IMR-90 (cell line): ENCODE measurements at regions of chr17 and their contacts with region 1.

Region 1: DNA sequence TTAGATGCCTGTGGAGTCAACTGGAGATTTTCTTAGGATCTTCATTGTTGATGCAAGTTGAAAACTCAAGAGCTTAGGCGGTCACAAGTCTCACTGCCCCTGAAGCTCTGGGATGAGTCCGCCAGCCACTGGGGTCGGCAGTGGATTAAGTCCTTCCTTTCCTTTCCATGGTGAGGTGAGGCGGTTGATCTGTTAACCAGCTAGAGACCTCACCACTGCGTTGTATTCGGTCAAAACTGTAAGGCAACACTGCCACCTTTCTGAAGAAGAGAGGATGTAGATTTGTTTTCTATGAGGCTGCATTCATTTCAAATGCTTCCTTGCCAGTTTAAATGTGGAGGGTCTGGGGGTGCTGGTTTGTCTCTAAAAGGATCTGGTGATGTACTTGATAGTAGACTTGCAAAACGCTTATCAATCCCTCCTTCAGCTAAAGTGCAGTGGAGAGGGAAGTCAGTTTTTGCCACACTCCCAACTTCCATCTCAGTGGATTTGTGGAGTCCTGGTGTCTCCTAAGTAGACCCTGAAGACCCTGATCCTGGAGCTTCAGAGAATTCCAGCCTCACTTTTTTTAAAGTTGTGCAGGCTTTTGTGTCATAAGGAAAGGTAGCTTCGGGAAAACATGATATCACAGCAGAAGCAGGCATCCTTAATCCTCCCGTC is 1.7 kb downstream of the MYOCD start:
- DNase-seq: peak; percentile 89
- ATAC-seq: peak; percentile 63
- H3K4me3 ChIP-seq: peak overlapping the region; percentile 94
- H3K27ac ChIP-seq: peak overlapping the region; percentile 42
- H3K4me1 ChIP-seq: peaks cover 9% of the 10 kb centered on the region
- H3K27me3 ChIP-seq: no peaks in the 10 kb centered on the region
- CTCF ChIP-seq: peak; percentile 87
- POLR2A ChIP-seq: peak; percentile 46
- RAD21 ChIP-seq: peak; percentile 93

Region 2: DNA sequence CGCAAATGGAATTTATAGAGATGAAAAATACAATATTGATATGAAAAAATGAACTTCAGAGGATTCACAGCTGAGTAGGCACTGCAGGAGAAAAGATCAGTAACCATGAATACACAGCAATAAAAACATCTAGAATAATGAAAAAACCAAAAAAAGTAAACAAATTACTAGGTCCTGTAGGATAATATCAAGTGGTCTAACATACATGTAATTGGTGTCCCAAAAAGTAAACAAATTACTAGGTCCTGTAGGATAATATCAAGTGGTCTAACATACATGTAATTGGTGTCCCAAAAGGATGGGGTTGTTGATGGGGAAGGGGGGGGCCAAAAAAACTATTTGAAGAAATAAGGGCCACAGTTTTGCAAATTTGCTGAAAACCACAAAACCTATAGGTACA is 713.5 kb before region 1 on chr17:
- CTCF ChIA-PET with region 1: no interaction called
- POLR2A ChIA-PET with region 1: no interaction called
- dilution Hi-C with region 1: no loop called
- in situ Hi-C with region 1: no loop called
- intact Hi-C with region 1: no loop called
- DNase-seq: no peak
- ATAC-seq: no peak
- H3K4me3 ChIP-seq: no peak overlapping the region
- H3K27ac ChIP-seq: no peak overlapping the region
- H3K4me1 ChIP-seq: no peaks in the 10 kb centered on the region
- H3K27me3 ChIP-seq: no peaks in the 10 kb centered on the region
- CTCF ChIP-seq: no peak
- POLR2A ChIP-seq: no peak
- RAD21 ChIP-seq: no peak

Region 3: DNA sequence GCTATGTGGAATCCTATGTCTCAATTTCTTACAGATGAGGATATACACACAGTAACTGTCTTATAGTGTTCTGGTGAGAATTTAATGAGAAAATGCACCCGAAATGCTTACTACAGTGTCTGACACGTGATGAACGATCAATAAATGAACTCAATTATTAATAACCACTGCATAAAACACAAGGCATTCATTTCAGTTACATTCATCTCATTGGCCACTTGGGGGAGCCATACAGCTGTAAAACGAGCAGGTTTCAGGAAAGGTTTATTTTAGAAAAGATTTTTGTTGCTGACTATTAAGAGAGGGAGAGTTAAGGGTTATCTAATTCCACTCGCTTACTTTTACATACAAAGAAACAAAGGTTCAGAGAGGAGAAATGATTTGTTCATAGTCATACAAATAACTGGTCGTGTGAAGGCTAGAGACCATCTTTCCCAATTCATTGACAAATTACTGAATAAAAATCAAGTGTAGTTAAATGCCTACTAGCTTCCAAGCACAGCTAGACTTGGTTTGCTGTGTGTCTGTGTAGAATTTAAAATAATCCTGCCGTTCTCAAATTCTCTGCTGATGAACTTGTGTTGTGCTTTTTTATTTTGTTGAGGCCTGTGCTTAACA is 486.7 kb before region 1 on chr17:
- CTCF ChIA-PET with region 1: interaction called, 8 read pairs
- POLR2A ChIA-PET with region 1: no interaction called
- dilution Hi-C with region 1: no loop called
- in situ Hi-C with region 1: loop called (anchors 5 kb)
- intact Hi-C with region 1: loop called (anchors 1 kb)
- DNase-seq: peak; percentile 79
- ATAC-seq: peak; percentile 96
- H3K4me3 ChIP-seq: no peak overlapping the region
- H3K27ac ChIP-seq: no peak overlapping the region
- H3K4me1 ChIP-seq: no peaks in the 10 kb centered on the region
- H3K27me3 ChIP-seq: no peaks in the 10 kb centered on the region
- CTCF ChIP-seq: peak; percentile 90
- POLR2A ChIP-seq: 0 out of 2 replicates have a peak, but pooled peaks have one; percentile 30
- RAD21 ChIP-seq: peak; percentile 91

Region 4: DNA sequence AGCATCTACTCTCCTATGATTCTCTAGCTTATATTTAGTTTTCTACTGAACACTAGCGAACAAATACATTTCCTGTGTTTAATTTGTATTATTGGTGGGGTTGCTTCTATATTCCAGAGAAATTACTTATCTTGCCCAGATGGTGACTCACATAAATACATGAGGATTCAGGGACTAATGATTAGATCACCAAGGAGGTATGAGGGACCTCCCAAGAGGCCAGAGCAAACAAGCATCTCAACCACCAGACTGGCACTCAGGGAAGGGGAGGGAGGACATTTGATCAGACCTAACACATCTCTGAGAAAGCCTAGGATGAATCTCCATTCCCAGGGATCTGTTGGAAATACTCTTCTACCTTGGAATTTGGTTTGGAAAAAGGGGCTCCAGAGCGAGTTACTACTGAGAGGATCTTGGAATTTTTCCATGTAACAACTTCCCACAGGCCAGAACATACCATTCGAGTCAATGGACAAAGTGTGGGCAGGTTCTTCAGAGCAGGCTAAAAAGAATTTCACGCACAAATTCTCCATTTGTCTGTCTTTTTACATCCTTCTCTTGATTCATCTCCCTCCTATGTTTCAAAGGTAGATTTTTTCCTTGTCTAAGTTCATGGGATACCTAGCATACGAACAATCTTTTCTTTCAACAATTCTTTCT is 264.3 kb before region 1 on chr17:
- CTCF ChIA-PET with region 1: no interaction called
- POLR2A ChIA-PET with region 1: no interaction called
- dilution Hi-C with region 1: no loop called
- in situ Hi-C with region 1: no loop called
- intact Hi-C with region 1: loop called (anchors 5 kb)
- DNase-seq: peak; percentile 97
- ATAC-seq: peak; percentile 95
- H3K4me3 ChIP-seq: no peak overlapping the region
- H3K27ac ChIP-seq: peak overlapping the region; percentile 4; the same call in 1 of the 2 replicates
- H3K4me1 ChIP-seq: peaks cover 8% of the 10 kb centered on the region
- H3K27me3 ChIP-seq: no peaks in the 10 kb centered on the region
- CTCF ChIP-seq: no peak
- POLR2A ChIP-seq: 0 out of 2 replicates have a peak, but pooled peaks have one; percentile 44
- RAD21 ChIP-seq: no peak

Region 5: GRCh38 chr17:12545877-12546513 is 121.4 kb before region 1 on chr17:
- CTCF ChIA-PET with region 1: interaction called, 21 read pairs
- POLR2A ChIA-PET with region 1: no interaction called
- dilution Hi-C with region 1: no loop called
- in situ Hi-C with region 1: loop called (anchors 5 kb)
- intact Hi-C with region 1: loop called (anchors 1 kb)
- DNase-seq: peak; percentile 63
- ATAC-seq: peak; percentile 88
- H3K4me3 ChIP-seq: no peak overlapping the region
- H3K27ac ChIP-seq: no peak overlapping the region
- H3K4me1 ChIP-seq: peaks cover 4% of the 10 kb centered on the region; the same call in 1 of the 2 replicates
- H3K27me3 ChIP-seq: no peaks in the 10 kb centered on the region
- CTCF ChIP-seq: peak; percentile 70
- POLR2A ChIP-seq: no peak
- RAD21 ChIP-seq: peak; percentile 75

Region 6: GRCh38 chr17:13002766-13003451 is 335.5 kb after region 1 on chr17:
- CTCF ChIA-PET with region 1: interaction called, 4 read pairs
- POLR2A ChIA-PET with region 1: no interaction called
- dilution Hi-C with region 1: no loop called
- in situ Hi-C with region 1: loop called (anchors 10 kb)
- intact Hi-C with region 1: loop called (anchors 1 kb)
- DNase-seq: peak; percentile 77
- ATAC-seq: peak; percentile 95
- H3K4me3 ChIP-seq: no peak overlapping the region
- H3K27ac ChIP-seq: no peak overlapping the region
- H3K4me1 ChIP-seq: no peaks in the 10 kb centered on the region
- H3K27me3 ChIP-seq: no peaks in the 10 kb centered on the region
- CTCF ChIP-seq: peak; percentile 83
- POLR2A ChIP-seq: no peak
- RAD21 ChIP-seq: peak; percentile 88